Activated B cell treated with CpG ODN at 0.5 μM for 24 hours (primary cell): ENCODE measurements at regions of chr10 and their contacts with region 1.

Region 1: DNA sequence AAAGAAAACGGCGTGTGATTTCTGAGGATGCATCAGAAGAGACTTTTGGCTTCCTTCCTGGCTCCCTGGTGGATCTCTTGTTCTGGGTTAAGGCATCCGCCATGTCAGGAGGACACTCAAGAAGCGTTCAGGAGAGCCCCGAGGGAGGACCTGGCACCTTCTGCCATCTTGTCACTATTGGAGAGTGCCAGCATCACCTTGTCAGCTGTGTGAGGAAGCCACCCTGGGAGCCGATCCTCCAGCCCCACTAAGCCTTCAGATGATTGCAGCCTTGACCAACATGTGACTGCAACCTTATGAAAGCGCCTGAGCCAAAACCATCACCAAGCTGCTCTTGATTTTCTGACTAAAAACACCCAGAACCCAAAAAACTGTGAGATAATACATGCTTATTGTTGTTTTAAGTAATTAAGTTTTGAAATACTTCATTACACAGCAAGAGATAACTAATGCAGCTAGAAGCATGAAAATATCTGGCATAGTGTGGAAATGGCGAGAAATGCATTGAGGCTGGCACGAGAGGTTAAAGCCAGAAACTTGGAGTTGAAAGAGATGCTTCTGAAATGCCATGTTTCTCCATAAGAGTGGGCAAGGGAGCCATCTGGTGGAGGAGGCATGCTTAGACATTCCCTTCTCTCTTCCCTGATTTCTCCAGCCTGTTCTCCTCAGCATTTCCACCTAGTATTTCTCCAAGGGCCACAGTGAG is 5.4 kb upstream of the ZFYVE27 start:
- DNase-seq: no peak
- ATAC-seq: peak; percentile 75
- H3K4me3 Mint-ChIP-seq: no peak overlapping the region
- H3K27ac Mint-ChIP-seq: no peak overlapping the region
- H3K4me1 Mint-ChIP-seq: peaks cover 5% of the 10 kb centered on the region
- H3K27me3 Mint-ChIP-seq: peaks cover 8% of the 10 kb centered on the region
- CTCF ChIP-seq: no peak

Region 2: DNA sequence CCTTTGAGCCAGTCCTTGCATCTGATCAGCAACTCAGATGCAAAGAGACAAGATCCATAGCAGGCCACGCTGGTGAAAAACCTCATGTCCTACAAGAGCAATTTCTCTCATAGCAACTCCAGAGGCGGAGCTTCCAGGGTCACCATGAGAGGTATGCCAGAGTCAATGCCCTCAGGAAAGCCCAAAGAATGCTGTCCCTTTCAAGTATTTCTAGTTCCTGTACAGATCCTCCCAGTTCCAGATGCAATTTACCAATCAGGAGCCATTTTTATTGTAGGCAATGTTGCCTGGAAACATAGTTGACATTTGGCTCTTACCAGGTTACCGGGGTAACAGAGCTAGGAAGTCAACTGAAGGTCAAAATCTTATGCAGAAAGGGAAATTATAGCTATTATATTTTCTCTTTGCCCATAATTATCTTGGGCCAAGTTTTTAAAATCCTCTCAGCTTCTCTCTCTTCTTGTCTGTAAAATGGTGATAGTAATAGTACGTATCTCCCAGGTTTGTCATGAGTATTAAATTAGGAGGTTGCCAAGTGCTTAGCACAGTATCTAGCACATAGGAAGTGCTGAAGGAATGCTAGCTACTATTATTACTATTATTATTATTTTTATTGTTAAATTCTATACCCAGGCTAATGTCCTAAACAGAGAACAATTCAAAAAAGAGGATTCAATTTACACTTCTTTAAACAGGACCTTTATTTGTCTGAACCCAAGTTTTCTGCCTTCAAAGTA is 1098.4 kb before region 1 on chr10:
- CTCF ChIA-PET with region 1: no interaction called
- POLR2A ChIA-PET with region 1: no interaction called
- intact Hi-C with region 1: no loop called
- DNase-seq: no peak
- ATAC-seq: no peak
- H3K4me3 Mint-ChIP-seq: no peak overlapping the region
- H3K27ac Mint-ChIP-seq: no peak overlapping the region
- H3K4me1 Mint-ChIP-seq: peaks cover 6% of the 10 kb centered on the region
- H3K27me3 Mint-ChIP-seq: no peaks in the 10 kb centered on the region
- CTCF ChIP-seq: no peak

Region 3: DNA sequence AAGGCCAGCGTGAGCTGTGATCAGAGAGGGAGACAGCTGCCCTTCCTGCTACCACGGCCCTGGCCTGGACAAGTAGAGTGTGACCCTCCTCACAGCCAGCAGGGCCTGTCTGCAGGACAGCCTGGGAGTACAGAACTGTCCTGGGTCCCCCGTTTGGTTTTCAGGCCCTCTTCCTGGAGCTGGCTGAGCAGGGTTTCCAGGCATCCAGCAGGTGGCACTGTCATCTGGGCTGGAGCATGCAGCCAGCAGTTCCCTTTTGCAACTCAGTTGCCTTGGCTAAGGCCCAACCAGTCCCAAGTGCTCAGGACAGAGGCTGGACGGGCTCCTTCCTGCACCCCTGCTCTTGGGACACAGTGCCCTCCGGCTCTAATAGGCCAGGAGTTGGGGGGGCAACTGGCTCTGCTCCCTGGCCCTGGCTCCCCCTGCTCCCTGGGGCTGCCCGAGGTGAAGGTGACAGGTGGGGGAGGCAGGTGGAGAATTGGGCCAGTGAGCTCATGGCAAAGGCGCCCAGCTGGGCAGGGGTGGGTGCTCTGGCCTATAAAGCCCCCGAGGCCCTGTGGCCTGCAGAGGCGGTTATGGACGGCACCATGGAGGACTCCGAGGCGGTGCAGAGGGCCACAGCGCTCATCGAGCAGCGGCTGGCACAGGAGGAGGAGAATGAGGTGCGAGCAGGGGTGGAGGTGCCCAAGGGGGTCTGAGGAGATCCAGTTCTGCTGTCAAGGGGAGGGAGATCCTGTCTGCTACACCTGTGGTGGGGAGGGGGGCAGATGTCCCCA is 159.1 kb before region 1 on chr10 and contains the start of gene ANKRD2:
- CTCF ChIA-PET with region 1: interaction called, 9 read pairs
- POLR2A ChIA-PET with region 1: interaction called, 4 read pairs
- intact Hi-C with region 1: loop called (anchors 1 kb)
- DNase-seq: peak; percentile 30
- ATAC-seq: peak; percentile 68
- H3K4me3 Mint-ChIP-seq: no peak within 1 kb of the TSS
- H3K27ac Mint-ChIP-seq: no peak within 1 kb of the TSS
- H3K4me1 Mint-ChIP-seq: no peaks in the 10 kb centered on the region
- H3K27me3 Mint-ChIP-seq: peaks cover 4% of the 10 kb centered on the region
- CTCF ChIP-seq: no peak
- total RNA-seq, gene ANKRD2: not detected in 2 replicates

Region 4: GRCh38 chr10:97701438-97702069 is 29.9 kb before region 1 on chr10:
- CTCF ChIA-PET with region 1: interaction called, 40 read pairs
- POLR2A ChIA-PET with region 1: no interaction called
- intact Hi-C with region 1: loop called (anchors 1 kb)
- DNase-seq: no peak
- ATAC-seq: peak; percentile 73
- H3K4me3 Mint-ChIP-seq: no peak overlapping the region
- H3K27ac Mint-ChIP-seq: no peak overlapping the region
- H3K4me1 Mint-ChIP-seq: no peaks in the 10 kb centered on the region
- H3K27me3 Mint-ChIP-seq: peaks cover 13% of the 10 kb centered on the region
- CTCF ChIP-seq: no peak

Region 5: GRCh38 chr10:97714048-97714371 is 17.5 kb before region 1 on chr10:
- CTCF ChIA-PET with region 1: interaction called, 39 read pairs
- POLR2A ChIA-PET with region 1: interaction called, 9 read pairs
- intact Hi-C with region 1: loop called (anchors 1 kb)
- DNase-seq: peak; percentile 47
- ATAC-seq: peak; percentile 84
- H3K4me3 Mint-ChIP-seq: peak overlapping the region; percentile 97
- H3K27ac Mint-ChIP-seq: peak overlapping the region; percentile 73
- H3K4me1 Mint-ChIP-seq: peaks cover 14% of the 10 kb centered on the region
- H3K27me3 Mint-ChIP-seq: peaks cover 22% of the 10 kb centered on the region
- CTCF ChIP-seq: no peak